Activated CD4-positive, alpha-beta T cell treated with anti-CD3 and anti-CD28 coated beads for 36 hours (primary cell): ENCODE measurements at regions of chr6 and their contacts with region 1.

Region 1: GRCh38 chr6:45737331-45738056 is 278.2 kb downstream of the CLIC5 start:
- DNase-seq: peak; percentile 27
- ATAC-seq: peak; percentile 75
- H3K4me3 Mint-ChIP-seq: peak overlapping the region; percentile 13
- H3K27ac Mint-ChIP-seq: peak overlapping the region; percentile 84
- H3K4me1 Mint-ChIP-seq: peaks cover 56% of the 10 kb centered on the region
- H3K27me3 Mint-ChIP-seq: peaks cover 12% of the 10 kb centered on the region

Region 2: GRCh38 chr6:45479834-45480751 is 257.4 kb before region 1 on chr6:
- CTCF ChIA-PET with region 1: no interaction called
- POLR2A ChIA-PET with region 1: no interaction called
- intact Hi-C with region 1: loop called in 1 of 2 experiments (anchors 1 kb)
- DNase-seq: peak; percentile 18
- ATAC-seq: peak; percentile 47
- H3K4me3 Mint-ChIP-seq: no peak overlapping the region
- H3K27ac Mint-ChIP-seq: peak overlapping the region; percentile 44
- H3K4me1 Mint-ChIP-seq: peaks cover 34% of the 10 kb centered on the region
- H3K27me3 Mint-ChIP-seq: no peaks in the 10 kb centered on the region

Region 3: DNA sequence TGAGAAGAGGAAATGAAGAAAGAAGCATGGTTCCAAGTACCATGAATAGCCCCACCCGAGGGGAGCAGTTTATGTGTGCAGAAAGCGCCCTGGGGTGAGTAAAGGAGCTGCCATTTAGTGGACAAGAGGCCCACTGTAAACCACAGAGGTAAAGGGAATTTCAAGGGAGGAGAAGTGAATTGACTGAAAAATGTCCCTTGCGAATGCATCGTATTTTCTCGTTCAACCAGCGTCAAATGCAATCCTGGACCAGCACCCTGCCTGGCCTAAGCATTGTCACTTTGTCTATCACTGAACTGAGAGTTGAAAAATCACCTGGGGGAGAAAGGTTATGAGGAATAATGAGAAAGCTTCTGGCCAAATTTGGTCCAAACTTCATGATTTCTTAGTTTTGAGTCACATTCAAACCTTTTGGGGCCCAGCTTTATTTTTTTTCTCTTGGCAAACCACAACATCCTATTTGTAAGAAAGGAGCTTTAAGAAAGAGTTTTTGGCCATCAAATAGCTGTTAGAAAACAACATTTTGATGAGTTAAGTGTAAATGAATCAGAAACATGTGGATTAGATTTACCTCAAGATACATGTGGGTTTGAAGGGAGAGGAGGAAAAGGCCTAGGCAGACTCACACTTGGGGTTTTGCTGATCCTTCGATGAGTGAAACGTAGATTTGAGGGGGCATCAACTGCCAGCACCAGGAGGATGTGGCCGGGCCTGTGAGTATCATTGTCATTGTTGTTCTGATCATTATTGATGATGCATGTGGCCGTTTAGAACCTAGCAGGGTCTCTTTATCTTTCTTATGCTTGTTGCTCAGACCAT is 64.2 kb after region 1 on chr6:
- CTCF ChIA-PET with region 1: interaction called, 3 read pairs
- POLR2A ChIA-PET with region 1: interaction called, 4 read pairs
- intact Hi-C with region 1: loop called (anchors 1 kb)
- DNase-seq: peak; percentile 80
- ATAC-seq: peak; percentile 82
- H3K4me3 Mint-ChIP-seq: no peak overlapping the region
- H3K27ac Mint-ChIP-seq: peak overlapping the region; percentile 72
- H3K4me1 Mint-ChIP-seq: peaks cover 22% of the 10 kb centered on the region
- H3K27me3 Mint-ChIP-seq: peaks cover 2% of the 10 kb centered on the region

Region 4: DNA sequence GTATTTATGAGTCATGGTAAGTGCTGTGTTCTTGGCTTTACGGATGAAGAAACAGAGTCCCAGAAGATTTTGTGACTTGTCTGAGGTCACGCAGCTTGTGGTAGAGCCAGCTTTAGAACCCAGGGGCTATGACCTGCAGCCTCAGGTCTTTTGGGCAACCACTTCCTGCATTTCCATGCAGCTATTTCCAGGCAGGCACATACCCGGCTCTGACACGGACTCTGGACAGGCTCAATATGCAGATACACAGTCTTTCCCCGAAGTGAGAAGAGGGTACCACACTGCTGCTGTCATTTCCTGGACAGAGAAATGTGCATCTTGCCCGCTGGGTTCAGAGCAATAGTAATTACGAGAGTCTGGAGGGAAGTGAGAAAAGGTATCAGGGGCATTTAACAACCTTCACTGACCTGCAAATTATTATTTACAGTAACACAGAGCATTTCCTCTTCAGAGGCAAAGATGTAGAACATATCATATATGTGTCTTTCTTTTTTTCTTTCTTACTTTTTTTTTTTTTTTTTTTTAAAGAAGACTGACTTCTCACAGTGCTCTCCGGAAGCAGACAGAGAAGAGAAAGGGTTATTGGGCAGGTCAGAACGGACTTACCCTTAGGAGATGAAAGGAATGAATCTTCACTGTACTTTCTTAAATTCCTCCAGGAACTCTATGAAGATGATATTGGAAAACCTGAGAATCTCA is 93.1 kb after region 1 on chr6:
- CTCF ChIA-PET with region 1: no interaction called
- POLR2A ChIA-PET with region 1: interaction called, 4 read pairs
- intact Hi-C with region 1: loop called (anchors 1 to 2 kb)
- DNase-seq: peak; percentile 79
- ATAC-seq: peak; percentile 79
- H3K4me3 Mint-ChIP-seq: peak overlapping the region; percentile 63
- H3K27ac Mint-ChIP-seq: peak overlapping the region; percentile 93
- H3K4me1 Mint-ChIP-seq: peaks cover 46% of the 10 kb centered on the region
- H3K27me3 Mint-ChIP-seq: peaks cover 4% of the 10 kb centered on the region

Region 5: GRCh38 chr6:45997875-45998506 is 260.5 kb after region 1 on chr6:
- CTCF ChIA-PET with region 1: no interaction called
- POLR2A ChIA-PET with region 1: no interaction called
- intact Hi-C with region 1: no loop called
- DNase-seq: no peak
- ATAC-seq: no peak
- H3K4me3 Mint-ChIP-seq: no peak overlapping the region
- H3K27ac Mint-ChIP-seq: no peak overlapping the region
- H3K4me1 Mint-ChIP-seq: no peaks in the 10 kb centered on the region
- H3K27me3 Mint-ChIP-seq: no peaks in the 10 kb centered on the region